Lower lobe of right lung (tissue), 2 donors: ENCODE measurements at regions of chr17 and their contacts with region 1.

Region 1: GRCh38 chr17:17681187-17681848 is at the start of gene RAI1:
- DNase-seq: peak; percentile 86
- ATAC-seq: peak; percentile 73 to 83
- H3K4me3 ChIP-seq: peak within 1 kb of the TSS; percentile 90
- H3K27ac ChIP-seq: peak within 1 kb of the TSS; percentile 95
- H3K4me1 ChIP-seq: peaks cover 33% of the 10 kb centered on the region
- H3K27me3 ChIP-seq: no peaks in the 10 kb centered on the region
- CTCF ChIP-seq: peak; percentile 53
- total RNA-seq, gene RAI1: 31.1 TPM

Region 2: DNA sequence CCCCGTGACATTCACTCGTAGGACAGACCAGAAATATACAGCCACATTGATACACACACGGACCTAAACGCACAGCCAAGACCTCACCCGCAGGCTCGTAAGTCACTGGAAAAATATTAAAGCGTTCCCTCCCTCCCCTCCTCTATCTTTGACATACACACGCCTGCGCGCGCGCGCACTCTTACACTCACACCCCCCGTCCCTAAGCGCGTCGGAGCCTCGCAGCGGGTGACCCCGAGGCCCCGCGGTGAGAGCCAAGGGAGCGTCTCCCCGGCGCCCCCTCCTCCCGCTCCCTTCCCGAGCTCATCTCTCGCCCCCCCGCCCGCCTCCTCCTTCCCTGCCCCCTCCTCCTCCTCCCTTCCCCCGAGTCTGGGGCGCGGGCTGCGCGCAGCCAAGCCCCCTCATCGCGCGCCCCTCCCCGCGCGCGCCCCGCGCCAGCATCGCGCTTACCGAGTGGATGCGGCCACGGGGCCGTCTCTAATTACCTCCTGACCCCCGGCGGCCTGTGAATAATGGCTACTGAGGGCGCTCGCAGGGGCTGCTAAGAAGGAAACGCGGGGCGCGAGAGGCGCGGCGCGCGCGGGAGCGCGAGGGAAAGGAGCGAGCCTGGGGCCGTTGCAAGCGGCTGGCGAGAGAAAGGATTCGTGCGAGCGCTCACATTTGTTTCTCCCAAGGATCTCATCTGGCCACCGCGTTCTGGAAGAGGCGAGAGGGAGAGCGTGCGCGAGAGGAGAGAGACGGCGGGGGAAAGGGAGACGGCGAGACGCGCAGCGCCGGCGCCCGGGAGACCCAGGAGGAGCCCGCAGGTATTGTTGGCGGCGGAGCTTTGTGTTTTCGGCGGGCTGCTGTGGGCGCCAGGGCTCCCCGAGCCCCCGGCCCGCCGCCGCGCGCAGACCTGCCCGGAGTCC is 42.3 kb after region 1 on chr17:
- intact Hi-C with region 1: no loop called
- DNase-seq: no peak
- ATAC-seq: peak; percentile 4 to 35
- H3K4me3 ChIP-seq: peak overlapping the region; percentile 60
- H3K27ac ChIP-seq: no peak overlapping the region
- H3K4me1 ChIP-seq: peaks cover 37% of the 10 kb centered on the region
- H3K27me3 ChIP-seq: no peaks in the 10 kb centered on the region
- CTCF ChIP-seq: no peak

Region 3: DNA sequence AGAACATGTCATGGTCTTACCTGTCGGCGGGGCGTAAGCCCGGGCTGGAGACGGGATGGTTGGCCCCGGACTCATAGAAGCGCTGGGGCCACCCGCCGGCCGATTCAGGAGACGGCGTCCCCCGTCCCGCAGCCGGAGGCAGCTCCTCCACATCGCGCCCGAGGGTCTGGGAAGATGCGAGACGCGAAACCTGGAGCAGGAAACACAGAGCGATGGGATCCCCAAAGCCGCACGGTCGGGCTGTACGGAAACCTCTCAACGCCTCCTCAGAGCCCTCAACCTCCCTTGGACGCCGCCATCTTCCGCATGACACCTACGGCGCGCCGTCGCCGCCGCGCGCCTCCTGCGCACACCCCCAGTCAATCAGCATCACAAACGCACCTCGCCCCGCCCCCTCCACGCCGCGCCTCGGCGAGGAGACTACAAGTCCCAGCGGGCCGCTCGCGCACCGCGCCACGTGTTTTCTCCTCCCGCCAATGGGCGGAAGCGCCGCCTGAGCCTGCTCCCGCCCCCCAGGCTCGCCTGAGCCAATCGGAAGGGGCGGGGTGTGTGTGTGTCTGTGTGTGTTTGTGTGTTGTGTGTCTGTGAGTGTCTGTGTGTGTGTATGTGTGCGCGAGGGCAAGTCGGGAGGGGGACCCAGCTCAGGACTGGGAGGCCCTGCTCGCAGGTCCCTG is 357.7 kb after region 1 on chr17 and contains the starts of genes ATPAF2 and GID4:
- intact Hi-C with region 1: loop called (anchors 10 kb)
- DNase-seq: peak; percentile 100
- ATAC-seq: peak; percentile 98 to 99
- H3K4me3 ChIP-seq: peak within 1 kb of the TSS; percentile 81
- H3K27ac ChIP-seq: peak within 1 kb of the TSS; percentile 84
- H3K4me1 ChIP-seq: peaks cover 38% of the 10 kb centered on the region
- H3K27me3 ChIP-seq: no peaks in the 10 kb centered on the region
- CTCF ChIP-seq: no peak
- total RNA-seq, gene ATPAF2: 22.9 TPM
- total RNA-seq, gene GID4: 11.9 TPM